Activated B cell treated with CpG ODN at 0.5 μM for 24 hours (primary cell): ENCODE measurements at regions of chr14 and their contacts with region 1.

Region 1: DNA sequence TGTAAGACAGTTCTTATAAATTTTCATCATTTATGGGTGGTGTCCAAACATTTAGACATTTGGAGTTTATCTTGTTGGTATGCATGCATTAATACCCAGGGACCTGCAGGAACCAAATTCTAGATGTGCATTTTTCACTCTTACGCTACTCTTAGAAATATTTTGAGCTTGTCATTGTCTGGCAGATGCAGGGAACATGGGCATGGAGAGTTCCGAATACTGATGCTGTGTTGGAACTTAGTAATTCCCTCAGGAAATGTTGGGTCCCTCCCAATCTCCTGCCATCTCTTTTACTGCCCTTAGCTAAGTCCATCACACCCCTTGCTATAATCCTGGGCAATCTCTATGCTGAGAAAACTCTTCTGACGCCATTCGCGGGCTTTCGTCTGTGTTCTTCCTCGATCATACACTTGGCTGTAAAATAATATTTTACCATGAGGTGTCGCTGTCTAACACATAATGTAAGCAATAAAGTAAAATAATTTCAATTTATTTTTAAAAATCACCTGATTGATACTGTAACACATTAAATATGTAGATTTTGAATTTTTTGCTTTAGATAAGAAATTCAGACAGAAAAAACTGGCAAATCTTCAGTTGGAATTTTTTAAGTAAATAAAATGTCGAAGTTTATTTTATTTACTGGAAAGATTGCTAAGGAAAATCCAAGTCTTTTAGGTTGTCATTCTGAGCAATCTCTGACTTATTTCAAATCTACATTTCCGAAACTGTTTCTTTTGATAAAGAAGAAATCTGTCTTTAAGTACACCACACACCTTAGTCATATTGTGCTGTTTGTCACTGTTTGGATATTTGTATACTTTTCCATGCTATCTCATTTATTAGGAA is 304.1 kb upstream of the SSTR1 start:
- DNase-seq: no peak
- ATAC-seq: no peak
- H3K4me3 Mint-ChIP-seq: no peak overlapping the region
- H3K27ac Mint-ChIP-seq: no peak overlapping the region
- H3K4me1 Mint-ChIP-seq: no peaks in the 10 kb centered on the region
- H3K27me3 Mint-ChIP-seq: peaks cover 4% of the 10 kb centered on the region
- CTCF ChIP-seq: no peak

Region 2: GRCh38 chr14:37916302-37916701 is 12.7 kb after region 1 on chr14:
- CTCF ChIA-PET with region 1: no interaction called
- POLR2A ChIA-PET with region 1: no interaction called
- intact Hi-C with region 1: no loop called
- DNase-seq: no peak
- ATAC-seq: no peak
- H3K4me3 Mint-ChIP-seq: no peak overlapping the region
- H3K27ac Mint-ChIP-seq: no peak overlapping the region
- H3K4me1 Mint-ChIP-seq: no peaks in the 10 kb centered on the region
- H3K27me3 Mint-ChIP-seq: no peaks in the 10 kb centered on the region
- CTCF ChIP-seq: no peak

Region 3: DNA sequence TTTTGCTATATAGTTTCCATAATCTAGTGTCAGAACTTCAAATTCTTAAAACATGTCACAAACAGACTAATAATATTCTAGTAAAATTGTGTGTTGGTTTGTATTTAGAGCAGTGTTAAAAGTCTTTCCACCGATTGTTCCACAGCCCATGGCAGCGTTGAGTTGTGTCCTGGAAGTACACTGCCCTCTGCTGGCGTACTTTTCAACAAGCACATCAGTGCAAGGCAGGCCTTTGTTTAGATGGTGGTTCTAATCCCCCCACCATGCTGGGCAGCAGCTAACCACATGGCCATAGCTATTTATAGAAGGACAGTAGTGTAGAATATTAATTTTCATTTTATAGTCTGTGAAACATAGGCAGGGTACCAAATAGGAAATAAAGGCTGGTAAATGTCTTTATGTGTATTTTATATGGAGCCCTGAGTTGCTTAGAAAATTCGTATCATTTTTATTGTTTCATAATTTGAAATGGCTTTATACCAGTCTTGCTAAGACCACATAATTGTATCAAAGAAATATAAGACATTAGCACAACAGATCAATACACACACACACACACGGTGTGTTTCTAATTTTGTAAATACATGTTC is 964.1 kb after region 1 on chr14:
- CTCF ChIA-PET with region 1: no interaction called
- POLR2A ChIA-PET with region 1: no interaction called
- intact Hi-C with region 1: loop called (anchors 2 kb)
- DNase-seq: no peak
- ATAC-seq: no peak
- H3K4me3 Mint-ChIP-seq: no peak overlapping the region
- H3K27ac Mint-ChIP-seq: no peak overlapping the region
- H3K4me1 Mint-ChIP-seq: no peaks in the 10 kb centered on the region
- H3K27me3 Mint-ChIP-seq: no peaks in the 10 kb centered on the region
- CTCF ChIP-seq: no peak